ENCODE measurements at regions of chr2 and their contacts with region 1.

Region 1: GRCh38 chr2:9782197-9782719 is 61.0 kb upstream of the TAF1B start:
- DNase-seq: peak; percentile 40 to 94 (median 64)
- ATAC-seq: peak; percentile 78
- H3K4me3 ChIP-seq: peak overlapping the region; percentile 22
- H3K4me3 Mint-ChIP-seq: peak overlapping the region; percentile 61
- H3K27ac ChIP-seq: peak overlapping the region; percentile 62 to 95
- H3K27ac Mint-ChIP-seq: peak overlapping the region; percentile 87
- H3K4me1 ChIP-seq: peaks cover 75% of the 10 kb centered on the region
- H3K4me1 Mint-ChIP-seq: peaks cover 57% of the 10 kb centered on the region
- H3K27me3 ChIP-seq: no peaks in the 10 kb centered on the region
- H3K27me3 Mint-ChIP-seq: no peaks in the 10 kb centered on the region
- CTCF ChIP-seq: no peak

Region 2: DNA sequence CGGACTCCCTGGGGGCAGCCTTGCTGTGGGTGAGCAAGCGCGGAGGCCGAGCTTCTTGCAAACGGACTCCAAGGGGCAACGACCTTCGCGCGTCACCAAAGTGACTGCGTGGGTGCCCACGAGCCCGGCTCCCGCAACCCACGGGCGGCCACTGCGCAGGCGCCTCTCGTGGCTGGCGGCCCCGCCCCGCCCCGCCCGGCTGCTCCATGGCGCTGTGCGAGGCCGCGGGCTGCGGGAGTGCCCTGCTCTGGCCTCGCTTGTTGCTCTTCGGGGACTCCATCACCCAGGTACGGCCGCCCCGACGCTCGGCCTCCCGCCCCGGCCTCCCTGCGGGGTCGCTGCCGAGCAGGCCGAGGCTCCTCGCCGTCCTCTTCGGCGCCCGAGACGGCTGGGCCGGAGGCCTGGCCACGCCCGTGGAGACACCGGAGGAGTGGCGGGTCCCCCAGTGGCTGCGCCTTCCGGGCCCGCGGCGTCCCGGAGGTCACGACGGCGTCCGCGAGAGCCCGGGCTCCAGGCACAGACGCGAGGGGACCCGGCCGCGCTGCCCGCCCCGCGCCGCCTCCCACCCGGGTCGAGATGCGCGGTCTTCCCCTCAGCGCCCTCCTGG is 307.8 kb before region 1 on chr2 and contains the start of gene IAH1:
- CTCF ChIA-PET with region 1: no interaction called
- POLR2A ChIA-PET with region 1: interaction called, 4 read pairs
- intact Hi-C with region 1: loop called in 1 of 2 experiments (anchors 10 kb)
- DNase-seq: peak; percentile 54 to 90 (median 75)
- ATAC-seq: peak; percentile 81
- H3K4me3 ChIP-seq: peak within 1 kb of the TSS; percentile 82
- H3K4me3 Mint-ChIP-seq: peak within 1 kb of the TSS; percentile 88
- H3K27ac ChIP-seq: peak within 1 kb of the TSS; percentile 90
- H3K27ac Mint-ChIP-seq: peak within 1 kb of the TSS; percentile 92
- H3K4me1 ChIP-seq: peaks cover 37% of the 10 kb centered on the region
- H3K4me1 Mint-ChIP-seq: peaks cover 59% of the 10 kb centered on the region
- H3K27me3 ChIP-seq: no peaks in the 10 kb centered on the region
- H3K27me3 Mint-ChIP-seq: no peaks in the 10 kb centered on the region
- CTCF ChIP-seq: no peak
- total RNA-seq, gene IAH1: 54.8 to 57.3 TPM

Region 3: DNA sequence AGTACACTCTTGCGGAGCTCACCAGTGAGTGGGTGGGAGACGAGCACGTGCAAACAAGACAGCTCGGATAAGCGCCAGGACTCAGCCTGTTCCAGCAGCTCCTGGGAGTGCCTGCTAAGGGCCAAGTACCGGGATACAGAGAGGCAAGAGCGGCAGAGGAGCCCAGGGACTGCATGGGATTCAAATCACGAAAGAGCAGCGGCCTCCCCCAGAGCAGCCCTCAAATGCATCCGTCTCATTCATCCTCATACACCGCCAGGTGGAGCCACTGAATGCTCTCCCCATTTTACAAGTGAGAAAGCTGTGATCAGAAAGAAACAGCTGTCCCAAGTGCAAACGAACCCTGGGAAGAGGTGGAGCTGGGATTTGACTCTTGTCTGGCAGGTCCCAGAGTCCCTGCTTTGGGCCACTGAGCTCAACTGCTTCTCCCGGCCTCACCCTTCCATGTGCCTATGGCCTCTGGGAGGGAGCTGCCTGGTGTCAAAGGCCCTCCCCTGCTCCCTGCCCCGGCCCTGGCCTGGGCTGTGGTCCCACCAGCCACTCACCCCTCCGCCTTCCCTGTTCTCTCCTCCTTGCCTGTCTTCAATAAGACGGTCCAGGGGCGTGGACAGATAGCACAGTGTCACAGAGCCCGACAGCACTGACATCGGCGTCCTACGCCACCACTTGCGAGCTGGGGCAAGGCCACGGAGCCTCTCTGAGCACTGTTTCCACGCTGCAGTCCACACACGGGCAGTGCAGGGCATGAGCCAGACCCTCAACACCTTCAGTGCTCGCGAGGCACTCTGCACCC is 11.8 kb before region 1 on chr2:
- CTCF ChIA-PET with region 1: interaction called, 11 read pairs
- POLR2A ChIA-PET with region 1: interaction called, 3 read pairs
- intact Hi-C with region 1: no loop called
- DNase-seq: peak; percentile 23 to 78 (median 45)
- ATAC-seq: peak; percentile 60
- H3K4me3 ChIP-seq: no peak overlapping the region
- H3K4me3 Mint-ChIP-seq: no peak overlapping the region
- H3K27ac ChIP-seq: no peak overlapping the region
- H3K27ac Mint-ChIP-seq: no peak overlapping the region
- H3K4me1 ChIP-seq: peaks cover 22% of the 10 kb centered on the region
- H3K4me1 Mint-ChIP-seq: peaks cover 5% of the 10 kb centered on the region
- H3K27me3 ChIP-seq: no peaks in the 10 kb centered on the region
- H3K27me3 Mint-ChIP-seq: no peaks in the 10 kb centered on the region
- CTCF ChIP-seq: peak; percentile 39

Measured in CD4-positive, alpha-beta T cell (primary cell).